H1 (cell line): ENCODE measurements at regions of chr11 and their contacts with region 1.

Region 1: DNA sequence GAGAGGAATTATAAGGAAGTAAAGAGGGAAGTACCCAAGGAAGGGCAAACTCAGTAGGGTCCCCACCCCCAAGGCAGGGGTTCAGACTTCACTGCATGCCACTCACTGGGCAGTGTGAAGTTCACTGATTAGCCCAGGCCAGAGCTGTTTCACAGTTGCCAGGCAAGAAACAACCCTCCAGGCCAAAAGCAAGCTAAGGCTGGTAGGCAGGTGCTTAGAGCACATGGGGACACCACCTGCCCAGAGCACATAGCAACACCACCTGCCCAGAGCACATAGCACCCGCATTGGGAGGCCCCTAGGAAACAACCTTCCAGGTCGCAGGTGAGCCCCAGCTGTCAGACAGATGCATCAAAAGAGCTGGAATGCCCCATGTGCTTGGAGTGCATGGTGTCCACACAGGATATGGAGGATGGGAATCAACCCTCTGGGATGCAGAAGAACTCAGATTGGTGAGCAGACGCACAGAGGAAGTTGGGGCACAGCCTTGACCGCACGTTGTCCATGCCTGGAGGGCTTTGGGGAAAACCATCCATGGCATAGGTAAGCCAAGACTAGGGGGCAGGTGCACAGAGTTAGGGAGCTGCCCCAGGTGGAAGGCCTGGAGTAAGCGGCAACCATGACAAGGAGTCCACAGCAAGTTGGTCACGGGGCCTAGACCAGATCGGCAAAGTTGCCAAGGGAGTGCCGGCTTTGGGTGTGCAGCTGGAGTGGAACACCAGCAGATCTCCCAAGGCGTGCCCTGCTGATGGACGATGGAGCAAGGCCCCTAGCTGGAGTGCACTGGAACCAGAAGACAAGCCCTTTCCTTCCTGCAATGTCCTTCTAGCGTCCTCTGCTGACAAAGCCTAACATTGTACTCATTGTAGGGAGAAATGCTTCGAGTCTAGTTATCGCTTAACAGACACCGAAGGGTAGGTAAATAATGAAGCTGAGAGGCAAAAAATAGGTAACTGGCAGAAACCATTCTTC is 7.8 kb upstream of the TMEM216 start:
- DNase-seq: peak in 1 of 2 experiments; percentile 53
- H3K4me3 ChIP-seq: no peak overlapping the region
- H3K27ac ChIP-seq: no peak overlapping the region
- H3K4me1 ChIP-seq: no peaks in the 10 kb centered on the region
- H3K27me3 ChIP-seq: no peaks in the 10 kb centered on the region
- CTCF ChIP-seq: peak; percentile 33 to 71 (median 68)
- EP300 ChIP-seq: no peak
- POLR2A ChIP-seq: no peak
- RAD21 ChIP-seq: peak; percentile 74 to 79

Region 2: GRCh38 chr11:60887556-60887955 is 497.0 kb before region 1 on chr11:
- CTCF ChIA-PET with region 1: no interaction called
- POLR2A ChIA-PET with region 1: no interaction called
- DNase-seq: peak in 1 of 2 experiments; percentile 60
- H3K4me3 ChIP-seq: no peak overlapping the region
- H3K27ac ChIP-seq: no peak overlapping the region
- H3K4me1 ChIP-seq: no peaks in the 10 kb centered on the region
- H3K27me3 ChIP-seq: no peaks in the 10 kb centered on the region
- CTCF ChIP-seq: peak; percentile 54 to 85 (median 84)
- EP300 ChIP-seq: no peak
- POLR2A ChIP-seq: no peak
- RAD21 ChIP-seq: peak; percentile 92 to 93

Region 3: GRCh38 chr11:61281581-61282250 is 102.8 kb before region 1 on chr11:
- CTCF ChIA-PET with region 1: interaction called, 10 read pairs
- POLR2A ChIA-PET with region 1: no interaction called
- DNase-seq: peak; percentile 62 to 96
- H3K4me3 ChIP-seq: peak overlapping the region in 3 of 4 experiments; percentile 17 to 28 (median 23); a peak in 2 of 8 replicates
- H3K27ac ChIP-seq: no peak overlapping the region
- H3K4me1 ChIP-seq: peaks cover 0 to 8% (median 5%) of the 10 kb centered on the region in 4 experiments; a peak in 4 of 7 replicates
- H3K27me3 ChIP-seq: peaks cover 0 to 5% (median under 1%) of the 10 kb centered on the region in 4 experiments; a peak in 4 of 7 replicates
- CTCF ChIP-seq: no peak
- EP300 ChIP-seq: no peak
- POLR2A ChIP-seq: peak in 1 of 2 experiments; percentile 77; a peak in 2 of 3 replicates
- RAD21 ChIP-seq: no peak

Region 4: DNA sequence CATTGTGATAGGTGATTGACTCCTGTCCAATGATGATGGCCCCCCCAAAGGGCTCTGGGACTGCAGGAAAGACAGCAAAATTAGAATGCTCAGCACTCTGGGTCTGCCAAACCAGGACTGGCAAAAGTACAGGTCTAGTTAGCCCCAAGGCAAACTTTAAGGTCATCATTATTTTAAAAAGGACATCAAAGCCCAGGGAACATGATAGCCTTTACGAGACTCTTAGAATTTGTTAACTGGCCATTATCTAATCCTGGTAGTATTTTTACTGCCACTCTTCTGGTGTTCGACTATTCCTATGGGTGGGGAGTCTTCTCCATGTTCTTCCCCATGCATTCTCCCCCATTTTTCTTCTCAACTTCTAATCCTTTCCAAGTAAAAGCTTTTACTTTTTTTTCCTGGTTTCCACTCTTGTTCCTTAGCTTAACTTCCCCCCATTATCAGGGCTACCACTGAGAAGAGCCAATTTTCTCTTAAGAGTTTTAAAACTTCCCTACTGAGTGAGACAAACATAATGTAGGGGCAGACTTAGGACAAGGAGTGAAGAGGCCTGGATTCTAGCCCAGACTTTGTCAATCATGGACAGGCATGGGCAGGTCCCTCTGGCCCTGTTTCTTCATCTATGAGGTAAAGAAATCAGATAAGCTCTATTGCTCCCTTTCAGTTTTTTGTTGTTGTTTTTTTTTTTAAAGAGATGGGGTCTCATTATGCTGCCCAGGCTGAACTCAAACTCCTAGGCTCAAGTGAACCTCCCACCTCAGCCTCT is 58.7 kb before region 1 on chr11:
- CTCF ChIA-PET with region 1: interaction called, 28 read pairs
- POLR2A ChIA-PET with region 1: no interaction called
- DNase-seq: no peak
- H3K4me3 ChIP-seq: no peak overlapping the region
- H3K27ac ChIP-seq: no peak overlapping the region
- H3K4me1 ChIP-seq: no peaks in the 10 kb centered on the region
- H3K27me3 ChIP-seq: no peaks in the 10 kb centered on the region
- CTCF ChIP-seq: no peak
- EP300 ChIP-seq: no peak
- POLR2A ChIP-seq: no peak
- RAD21 ChIP-seq: no peak

Region 5: DNA sequence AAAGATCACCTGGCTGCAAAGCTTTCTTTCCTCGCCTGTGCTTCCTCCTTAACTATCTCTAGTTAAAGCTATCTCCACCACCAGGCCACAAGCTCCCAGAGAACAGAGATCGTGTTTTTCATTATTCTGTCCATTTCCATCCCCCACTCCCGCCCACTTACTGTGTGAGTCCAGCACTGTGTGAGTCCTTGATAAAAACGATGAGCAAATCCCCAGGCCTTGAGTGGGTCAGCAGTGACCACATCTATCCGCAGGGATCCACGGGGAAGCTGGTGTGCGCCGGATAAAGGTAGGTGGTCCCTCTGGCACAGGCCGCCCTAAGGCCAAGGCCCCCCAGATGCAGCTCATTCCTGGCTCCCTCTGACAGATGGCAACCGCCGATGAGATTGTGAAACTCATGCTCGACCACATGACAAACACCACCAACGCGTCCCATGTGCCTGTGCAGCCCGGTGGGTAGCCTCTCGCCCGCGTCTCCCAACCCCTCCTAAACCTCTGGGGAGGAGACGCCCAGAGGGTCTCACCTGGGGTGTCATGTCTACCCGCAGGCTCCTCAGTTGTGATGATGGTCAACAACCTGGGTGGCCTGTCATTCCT is 42.3 kb before region 1 on chr11:
- CTCF ChIA-PET with region 1: interaction called, 290 read pairs
- POLR2A ChIA-PET with region 1: interaction called, 1,106 read pairs
- DNase-seq: no peak
- H3K4me3 ChIP-seq: no peak overlapping the region
- H3K27ac ChIP-seq: no peak overlapping the region
- H3K4me1 ChIP-seq: no peaks in the 10 kb centered on the region
- H3K27me3 ChIP-seq: no peaks in the 10 kb centered on the region
- CTCF ChIP-seq: no peak
- EP300 ChIP-seq: no peak
- POLR2A ChIP-seq: no peak
- RAD21 ChIP-seq: no peak

Region 6: DNA sequence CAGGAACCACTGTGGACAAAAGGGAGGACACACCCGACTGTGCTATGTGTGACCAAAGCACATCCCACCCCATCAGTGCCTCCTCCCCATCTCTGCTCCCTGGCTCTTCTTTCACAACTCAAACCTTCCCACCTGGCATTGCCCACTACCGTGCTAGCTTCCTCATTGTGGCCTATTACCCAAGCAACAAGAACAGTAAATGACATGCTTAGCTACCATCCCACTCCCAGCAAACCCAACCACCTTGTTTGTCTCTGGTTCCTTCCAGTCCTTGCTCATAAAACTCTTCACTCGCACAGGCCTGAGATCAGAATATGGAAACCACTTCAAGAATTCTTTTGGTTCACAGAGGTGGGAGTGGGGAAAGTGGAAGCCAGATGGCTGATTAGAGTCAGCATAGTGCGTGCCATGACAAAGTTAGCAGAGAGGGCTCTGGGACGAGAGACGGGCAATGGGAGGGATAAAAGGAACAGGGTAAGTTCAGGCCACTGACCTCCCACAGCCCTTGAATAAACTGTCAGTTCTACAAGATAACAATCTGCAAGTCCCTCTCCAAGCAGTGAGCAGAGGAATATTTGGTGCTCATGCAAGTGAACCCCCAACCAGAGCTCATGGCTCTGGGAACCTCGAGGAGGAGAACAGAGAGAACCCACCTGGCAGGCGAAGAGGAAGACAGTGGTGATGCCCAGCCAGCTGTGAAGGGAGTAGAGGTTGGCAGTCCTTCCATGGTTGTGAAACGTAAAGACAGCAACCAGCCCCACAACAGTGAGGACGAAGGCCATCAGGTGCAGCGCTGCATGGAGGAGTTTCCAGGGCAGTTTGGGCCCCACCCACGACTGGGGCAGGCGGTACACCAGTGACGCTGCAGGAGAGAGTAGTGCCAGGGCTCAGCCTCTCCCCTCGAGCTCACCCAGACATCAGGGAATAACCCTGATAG is 31.2 kb before region 1 on chr11:
- CTCF ChIA-PET with region 1: interaction called, 199 read pairs
- POLR2A ChIA-PET with region 1: interaction called, 1,106 read pairs
- DNase-seq: no peak
- H3K4me3 ChIP-seq: no peak overlapping the region
- H3K27ac ChIP-seq: no peak overlapping the region
- H3K4me1 ChIP-seq: no peaks in the 10 kb centered on the region
- H3K27me3 ChIP-seq: no peaks in the 10 kb centered on the region
- CTCF ChIP-seq: no peak
- EP300 ChIP-seq: no peak
- POLR2A ChIP-seq: no peak
- RAD21 ChIP-seq: no peak

Region 7: GRCh38 chr11:61406067-61406466 is 21.5 kb after region 1 on chr11:
- CTCF ChIA-PET with region 1: interaction called, 11 read pairs
- POLR2A ChIA-PET with region 1: interaction called, 60 read pairs
- DNase-seq: no peak
- H3K4me3 ChIP-seq: no peak overlapping the region
- H3K27ac ChIP-seq: no peak overlapping the region
- H3K4me1 ChIP-seq: no peaks in the 10 kb centered on the region
- H3K27me3 ChIP-seq: no peaks in the 10 kb centered on the region
- CTCF ChIP-seq: no peak
- EP300 ChIP-seq: no peak
- POLR2A ChIP-seq: no peak
- RAD21 ChIP-seq: no peak

Region 8: DNA sequence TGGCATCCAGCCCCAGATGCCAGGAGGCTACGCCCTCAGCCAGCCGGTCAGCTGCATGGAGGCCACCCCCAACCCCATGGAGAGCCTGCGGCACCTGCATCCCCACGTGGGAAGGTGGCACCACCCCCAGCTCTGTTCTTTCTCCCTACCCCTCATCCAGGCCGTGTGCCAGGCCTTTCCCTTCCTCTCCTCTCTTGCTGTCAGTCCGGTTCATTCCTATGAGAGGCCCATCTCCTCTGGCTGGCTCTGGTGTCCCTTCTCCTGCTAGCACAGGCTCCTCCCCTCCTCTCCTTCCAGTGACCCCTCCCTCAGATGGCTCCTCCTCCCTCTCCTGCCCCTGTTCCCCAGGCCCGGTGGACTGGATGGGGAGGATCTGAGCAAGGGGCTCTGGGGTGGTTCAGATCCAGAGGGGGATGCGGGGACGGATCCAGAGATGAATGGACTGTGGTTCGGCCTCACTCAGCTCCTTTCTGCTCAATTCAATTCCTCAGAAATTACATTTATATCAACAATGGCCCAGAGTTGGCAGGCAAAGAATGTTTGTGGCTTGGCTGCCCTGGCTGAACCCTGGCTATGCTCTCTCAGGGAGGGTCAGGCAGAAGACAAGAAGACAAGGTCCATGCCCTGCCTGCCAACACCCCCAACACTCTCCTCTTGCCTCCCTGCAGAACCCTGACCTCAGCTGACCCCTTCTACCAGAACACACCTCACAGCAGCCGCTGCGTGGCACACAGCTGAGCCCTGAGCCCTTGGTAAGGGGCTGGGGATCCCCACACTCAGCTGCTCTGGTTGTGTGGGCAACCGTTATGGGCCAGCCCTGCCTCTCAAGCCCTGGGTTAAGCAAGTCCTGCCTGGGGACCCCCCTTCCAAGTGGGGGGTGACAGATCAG is 105.5 kb after region 1 on chr11:
- CTCF ChIA-PET with region 1: no interaction called
- POLR2A ChIA-PET with region 1: no interaction called
- DNase-seq: peak in 1 of 2 experiments; percentile 63
- H3K4me3 ChIP-seq: no peak overlapping the region
- H3K27ac ChIP-seq: no peak overlapping the region
- H3K4me1 ChIP-seq: peaks cover 0 to 21% (median 16%) of the 10 kb centered on the region in 4 experiments; a peak in 6 of 7 replicates
- H3K27me3 ChIP-seq: 0 out of 7 replicates have a peak, but pooled peaks cover 0 to 2% (median 0%) of the 10 kb centered on the region in 4 experiments
- CTCF ChIP-seq: no peak
- EP300 ChIP-seq: no peak
- POLR2A ChIP-seq: no peak
- RAD21 ChIP-seq: no peak

Region 9: DNA sequence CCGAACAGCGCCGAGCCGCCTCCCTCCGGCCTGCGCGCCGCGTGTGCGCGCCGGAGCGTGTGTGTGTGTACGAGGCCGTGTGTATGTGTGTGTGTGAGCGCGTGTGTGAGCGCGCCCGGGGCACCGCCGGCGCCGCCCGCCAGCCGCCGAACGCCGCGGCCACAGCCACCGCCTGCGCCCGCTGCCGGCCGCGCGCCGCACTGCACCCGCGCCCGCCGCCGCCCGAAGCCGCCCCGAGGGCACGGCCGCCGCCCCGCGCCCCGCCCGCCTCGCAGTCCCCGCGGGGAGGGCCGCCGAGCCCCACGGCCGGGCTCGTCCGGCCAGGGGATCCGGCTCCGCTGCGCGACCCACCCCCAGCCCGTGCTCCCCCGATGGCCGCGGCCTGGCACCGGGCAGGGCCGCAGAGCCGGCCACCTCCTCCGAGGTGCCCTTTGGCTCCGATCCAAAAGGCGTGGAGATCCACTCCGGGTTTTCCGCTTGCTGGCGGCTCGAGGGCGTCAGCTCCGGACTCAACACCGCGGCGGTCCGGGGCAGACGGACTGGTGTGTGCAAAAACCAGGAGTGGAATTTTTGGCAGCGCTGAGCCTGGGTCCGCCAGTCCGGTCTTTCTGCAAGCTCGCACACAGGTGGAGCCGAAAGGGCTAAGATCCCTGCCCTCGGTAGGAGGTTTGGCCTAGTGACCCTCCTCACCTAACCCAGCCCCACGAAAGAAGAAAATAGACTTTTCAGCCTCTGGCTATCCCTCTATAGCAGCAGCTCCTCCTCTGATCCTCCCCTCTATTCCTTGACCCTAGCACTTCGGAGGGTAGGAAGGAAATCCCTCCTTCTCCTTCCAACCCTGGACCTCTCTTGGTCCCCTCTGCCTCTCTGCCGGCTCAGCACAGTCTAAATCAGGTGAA is 196.7 kb after region 1 on chr11 and contains the start of gene SYT7:
- CTCF ChIA-PET with region 1: no interaction called
- POLR2A ChIA-PET with region 1: no interaction called
- DNase-seq: peak; percentile 89 to 100
- H3K4me3 ChIP-seq: peak within 1 kb of the TSS; percentile 46 to 85 (median 64)
- H3K27ac ChIP-seq: no peak within 1 kb of the TSS
- H3K4me1 ChIP-seq: peaks cover 4 to 41% (median 31%) of the 10 kb centered on the region in 4 experiments
- H3K27me3 ChIP-seq: peaks cover 2 to 32% (median 26%) of the 10 kb centered on the region in 4 experiments
- CTCF ChIP-seq: peak in 1 of 3 experiments; percentile 9; a peak in 1 of 4 replicates
- EP300 ChIP-seq: peak in 1 of 2 experiments; percentile 67; a peak in 1 of 3 replicates
- POLR2A ChIP-seq: no peak
- RAD21 ChIP-seq: peak; percentile 1 to 9; a peak in 1 of 4 replicates
- total RNA-seq, gene SYT7: 10.5 and 10.6 TPM in 2 replicates